Activated T-helper 1 cell treated with anti-CD3 and anti-CD28 coated beads, Interleukin-12 subunit alpha, Interleukin-12 subunit beta, Interleukin-2, Interleukin-4 antibody, amounts not matched to agents 30 ng/mL and 10 ng/mL and 1 ng/mL, durations not matched to agents 14 hours and 24 hours and 36 hours (primary cell): ENCODE measurements at regions of chr6 and their contacts with region 1.

Region 1: GRCh38 chr6:4135665-4136353 is 434 bp upstream of the ECI2 start:
- DNase-seq: peak; percentile 88
- H3K4me3 Mint-ChIP-seq: peak overlapping the region; percentile 83
- H3K27ac Mint-ChIP-seq: peak overlapping the region; percentile 80
- H3K4me1 Mint-ChIP-seq: peaks cover 27% of the 10 kb centered on the region
- H3K27me3 Mint-ChIP-seq: peaks cover 4% of the 10 kb centered on the region

Region 2: DNA sequence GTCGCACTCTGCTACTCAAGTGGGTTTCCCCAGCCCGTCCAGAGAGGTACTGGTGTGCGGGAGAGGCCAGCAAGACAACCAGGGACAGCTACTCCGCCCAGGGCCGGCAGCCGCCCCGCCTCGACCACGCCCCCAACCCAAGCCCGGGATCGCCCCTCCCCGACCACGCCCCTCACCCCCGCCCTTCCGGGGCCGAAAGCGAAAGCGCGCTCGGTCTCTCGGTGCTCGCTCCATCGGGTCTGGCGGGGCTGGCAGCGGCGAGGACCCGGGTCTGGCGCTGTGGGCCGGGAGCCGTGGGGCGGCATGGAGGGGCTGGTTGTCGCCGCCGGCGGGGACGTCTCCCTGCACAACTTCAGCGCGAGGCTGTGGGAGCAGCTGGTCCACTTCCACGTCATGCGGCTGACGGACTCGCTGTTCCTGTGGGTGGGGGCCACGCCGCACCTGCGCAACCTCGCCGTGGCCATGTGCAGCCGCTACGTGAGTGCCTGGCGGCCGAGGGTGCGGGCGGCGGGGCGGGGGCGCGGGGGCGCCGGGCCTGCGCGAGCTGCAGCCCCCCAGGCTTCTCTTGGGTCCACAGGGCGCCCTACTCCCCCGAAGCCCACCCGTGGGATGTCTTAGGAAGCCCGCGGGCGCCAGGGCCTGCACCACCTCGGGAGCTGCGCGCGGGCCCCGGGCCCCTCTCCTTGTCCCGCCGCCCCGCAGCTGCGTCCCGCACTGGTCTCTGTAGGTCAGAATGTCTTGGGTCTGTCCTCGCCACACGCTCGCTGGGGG is 876.9 kb before region 1 on chr6 and contains the start of gene PSMG4:
- intact Hi-C with region 1: loop called (anchors 2 kb)
- DNase-seq: peak; percentile 91
- H3K4me3 Mint-ChIP-seq: peak within 1 kb of the TSS; percentile 99
- H3K27ac Mint-ChIP-seq: peak within 1 kb of the TSS; percentile 95
- H3K4me1 Mint-ChIP-seq: peaks cover 39% of the 10 kb centered on the region
- H3K27me3 Mint-ChIP-seq: peaks cover 11% of the 10 kb centered on the region
- total RNA-seq, gene PSMG4: 32.1 and 35.4 TPM in 2 replicates

Region 3: GRCh38 chr6:4018172-4018905 is 117.5 kb before region 1 on chr6:
- intact Hi-C with region 1: loop called (anchors 1 kb)
- DNase-seq: peak; percentile 96
- H3K4me3 Mint-ChIP-seq: peak overlapping the region; percentile 99
- H3K27ac Mint-ChIP-seq: peak overlapping the region; percentile 100
- H3K4me1 Mint-ChIP-seq: peaks cover 60% of the 10 kb centered on the region
- H3K27me3 Mint-ChIP-seq: no peaks in the 10 kb centered on the region

Region 4: GRCh38 chr6:4186385-4186784 is 50.6 kb after region 1 on chr6:
- intact Hi-C with region 1: loop called (anchors 2 kb)
- DNase-seq: no peak
- H3K4me3 Mint-ChIP-seq: no peak overlapping the region
- H3K27ac Mint-ChIP-seq: no peak overlapping the region
- H3K4me1 Mint-ChIP-seq: peaks cover 5% of the 10 kb centered on the region
- H3K27me3 Mint-ChIP-seq: peaks cover 6% of the 10 kb centered on the region

Region 5: GRCh38 chr6:4487546-4487945 is 351.7 kb after region 1 on chr6:
- intact Hi-C with region 1: no loop called
- DNase-seq: no peak
- H3K4me3 Mint-ChIP-seq: no peak overlapping the region
- H3K27ac Mint-ChIP-seq: no peak overlapping the region
- H3K4me1 Mint-ChIP-seq: no peaks in the 10 kb centered on the region
- H3K27me3 Mint-ChIP-seq: no peaks in the 10 kb centered on the region

Region 6: DNA sequence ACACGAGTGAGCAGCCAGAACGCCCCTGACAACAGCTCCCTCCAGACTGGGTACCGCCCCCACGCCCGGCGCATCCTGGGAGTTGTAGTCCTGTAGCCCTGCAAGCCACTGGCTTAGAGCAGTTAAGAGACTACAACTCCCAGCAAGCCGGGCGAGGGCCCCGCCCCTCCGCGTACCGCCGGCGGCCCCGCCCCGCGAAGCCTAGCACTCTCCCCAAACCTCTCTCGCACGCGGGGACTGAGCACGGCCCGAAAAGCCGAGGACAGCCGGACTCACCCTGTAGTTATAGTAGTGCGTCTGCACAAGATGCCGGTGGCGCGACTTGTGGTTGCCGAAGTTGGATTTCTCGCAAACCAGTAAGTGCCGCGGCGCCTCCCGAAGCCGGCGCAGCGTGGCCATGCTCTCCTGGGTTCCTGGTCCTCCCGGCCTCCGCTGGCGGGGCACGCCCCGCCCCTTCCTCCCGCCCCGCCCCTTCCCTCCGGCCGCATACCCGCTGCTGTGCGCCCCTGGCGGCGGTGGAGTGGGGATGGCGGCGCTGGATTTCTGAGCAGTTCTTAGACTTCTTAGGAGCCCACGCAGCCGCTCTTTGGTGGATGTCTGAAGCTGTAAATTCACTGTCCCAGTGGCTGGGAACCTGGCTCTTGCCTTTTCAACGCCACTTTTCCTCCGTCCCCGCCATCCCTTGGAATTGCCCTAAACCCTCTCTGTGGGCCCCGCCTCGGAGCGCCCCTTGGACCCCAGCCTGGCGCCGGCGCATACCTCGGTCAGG is 868.0 kb after region 1 on chr6 and contains the start of gene RPP40:
- intact Hi-C with region 1: loop called (anchors 2 kb)
- DNase-seq: peak; percentile 97
- H3K4me3 Mint-ChIP-seq: peak within 1 kb of the TSS; percentile 90
- H3K27ac Mint-ChIP-seq: peak within 1 kb of the TSS; percentile 95
- H3K4me1 Mint-ChIP-seq: peaks cover 4% of the 10 kb centered on the region
- H3K27me3 Mint-ChIP-seq: no peaks in the 10 kb centered on the region
- total RNA-seq, gene RPP40: 15.1 and 16.4 TPM in 2 replicates